A673 (cell line): ENCODE measurements at regions of chr10 and their contacts with region 1.

Region 1: GRCh38 chr10:63166742-63167258 is 33.7 kb downstream of the NRBF2 start:
- DNase-seq: peak; percentile 89
- H3K4me3 ChIP-seq: no peak overlapping the region
- H3K27ac ChIP-seq: no peak overlapping the region
- H3K4me1 ChIP-seq: peaks cover 36% of the 10 kb centered on the region
- H3K27me3 ChIP-seq: no peaks in the 10 kb centered on the region
- CTCF ChIP-seq: peak; percentile 84

Region 2: GRCh38 chr10:63133056-63133820 is 33.6 kb before region 1 on chr10 and contains the start of gene NRBF2:
- CTCF ChIA-PET with region 1: no interaction called
- POLR2A ChIA-PET with region 1: no interaction called
- intact Hi-C with region 1: no loop called
- DNase-seq: peak; percentile 99
- H3K4me3 ChIP-seq: peak within 1 kb of the TSS; percentile 85
- H3K27ac ChIP-seq: peak within 1 kb of the TSS; percentile 87
- H3K4me1 ChIP-seq: no peaks in the 10 kb centered on the region
- H3K27me3 ChIP-seq: no peaks in the 10 kb centered on the region
- CTCF ChIP-seq: peak; percentile 39; the same call in 1 of the 2 replicates
- total RNA-seq, gene NRBF2: 21.9 and 24.8 TPM in 2 replicates

Region 3: DNA sequence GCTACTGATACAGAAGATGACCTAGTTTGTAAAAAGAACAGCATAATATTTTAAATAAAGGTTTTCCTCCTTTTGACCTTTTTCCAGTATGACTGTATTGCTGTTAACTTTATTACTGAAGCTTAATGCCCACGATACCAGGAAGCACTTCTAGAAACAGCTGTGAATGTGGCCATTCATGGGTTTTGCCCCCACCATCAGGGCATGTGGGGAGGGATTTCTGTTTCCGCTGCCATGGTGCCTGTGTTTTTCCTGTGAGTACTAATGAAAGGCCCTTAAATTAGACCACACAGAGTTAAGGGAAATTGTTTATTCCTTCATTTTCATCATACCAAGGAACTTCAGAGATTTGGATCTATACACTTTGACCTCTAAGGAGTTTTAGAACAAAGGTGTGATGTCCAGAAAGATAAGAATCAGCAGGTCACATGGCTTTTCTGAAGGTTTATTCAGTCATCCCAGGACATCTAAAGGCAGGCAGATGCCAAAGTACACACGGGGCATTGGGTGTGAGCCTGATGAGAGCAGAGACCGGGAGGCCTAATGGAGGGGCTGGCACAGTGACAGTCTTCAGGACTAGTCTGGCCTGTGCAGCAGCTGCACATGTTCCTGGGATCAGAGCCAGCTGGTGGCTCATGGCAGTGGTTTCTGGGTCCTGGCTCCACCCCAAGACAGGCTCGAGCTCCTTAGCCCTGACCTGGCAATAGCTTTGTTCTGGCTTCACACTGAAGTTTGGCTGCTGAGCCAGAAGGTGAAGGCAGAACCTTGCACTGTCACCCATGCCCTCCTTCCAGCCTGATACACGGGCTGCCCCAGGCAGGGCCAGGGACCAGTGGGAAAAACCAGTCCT is 545.3 kb after region 1 on chr10:
- CTCF ChIA-PET with region 1: interaction called, 8 read pairs
- POLR2A ChIA-PET with region 1: interaction called, 3 read pairs
- intact Hi-C with region 1: loop called (anchors 2 kb)
- DNase-seq: peak; percentile 93
- H3K4me3 ChIP-seq: no peak overlapping the region
- H3K27ac ChIP-seq: peak overlapping the region; percentile 79
- H3K4me1 ChIP-seq: peaks cover 58% of the 10 kb centered on the region
- H3K27me3 ChIP-seq: no peaks in the 10 kb centered on the region
- CTCF ChIP-seq: no peak

Region 4: DNA sequence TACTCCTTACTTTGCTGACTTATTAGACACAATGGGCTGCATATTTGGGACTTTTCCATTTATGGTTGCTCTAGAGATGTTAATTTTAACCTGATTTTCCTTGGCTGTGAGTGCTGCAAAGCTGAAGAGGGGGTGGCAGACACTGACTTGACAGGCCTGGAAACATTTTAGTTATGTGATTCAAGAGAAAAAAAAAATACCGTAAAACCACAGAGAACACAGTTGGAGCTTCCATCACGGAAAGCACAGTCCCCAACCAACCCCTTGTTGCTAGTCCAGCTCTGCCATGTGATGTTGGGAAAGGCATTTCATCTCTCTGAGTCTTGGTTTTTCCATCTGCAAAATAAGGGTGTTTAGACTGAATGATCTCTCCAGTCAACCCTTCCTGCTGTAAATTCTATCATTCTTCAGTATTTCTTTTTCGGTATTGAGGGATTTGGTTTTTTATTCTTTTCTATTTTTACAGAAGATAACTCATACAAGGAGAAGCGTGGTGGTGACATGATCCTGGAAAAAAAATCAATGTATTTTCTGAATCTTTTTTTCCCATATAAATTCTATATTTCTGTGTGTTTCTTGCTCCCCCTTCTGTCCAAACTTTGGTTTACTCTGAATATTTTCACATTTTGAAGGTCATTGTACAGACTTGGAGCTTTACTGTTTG is 600.5 kb after region 1 on chr10:
- CTCF ChIA-PET with region 1: interaction called, 16 read pairs
- POLR2A ChIA-PET with region 1: no interaction called
- intact Hi-C with region 1: loop called (anchors 2 kb)
- DNase-seq: peak; percentile 71
- H3K4me3 ChIP-seq: no peak overlapping the region
- H3K27ac ChIP-seq: no peak overlapping the region
- H3K4me1 ChIP-seq: peaks cover 32% of the 10 kb centered on the region
- H3K27me3 ChIP-seq: no peaks in the 10 kb centered on the region
- CTCF ChIP-seq: peak; percentile 70